Mammary epithelial cell (primary cell): ENCODE measurements at regions of chr18 and their contacts with region 1.

Region 1: GRCh38 chr18:74196220-74197119 is 48.1 kb downstream of the TIMM21 start:
- DNase-seq: peak; percentile 52
- H3K4me3 ChIP-seq: peak overlapping the region; percentile 37 to 42 (median 39)
- H3K27ac ChIP-seq: no peak overlapping the region
- H3K4me1 ChIP-seq: no peaks in the 10 kb centered on the region
- H3K27me3 ChIP-seq: no peaks in the 10 kb centered on the region
- CTCF ChIP-seq: peak; percentile 74 to 88

Region 2: GRCh38 chr18:74139888-74140287 is 56.6 kb before region 1 on chr18:
- CTCF ChIA-PET with region 1: no interaction called
- dilution Hi-C with region 1: no loop called
- in situ Hi-C with region 1: no loop called
- intact Hi-C with region 1: no loop called
- DNase-seq: peak; percentile 61
- H3K4me3 ChIP-seq: no peak overlapping the region
- H3K27ac ChIP-seq: no peak overlapping the region
- H3K4me1 ChIP-seq: peaks cover 31% of the 10 kb centered on the region
- H3K27me3 ChIP-seq: no peaks in the 10 kb centered on the region
- CTCF ChIP-seq: no peak

Region 3: GRCh38 chr18:74234326-74235171 is 38.1 kb after region 1 on chr18:
- CTCF ChIA-PET with region 1: no interaction called
- dilution Hi-C with region 1: no loop called
- in situ Hi-C with region 1: no loop called
- intact Hi-C with region 1: no loop called
- DNase-seq: peak; percentile 41
- H3K4me3 ChIP-seq: no peak overlapping the region
- H3K27ac ChIP-seq: no peak overlapping the region
- H3K4me1 ChIP-seq: no peaks in the 10 kb centered on the region
- H3K27me3 ChIP-seq: no peaks in the 10 kb centered on the region
- CTCF ChIP-seq: no peak

Region 4: DNA sequence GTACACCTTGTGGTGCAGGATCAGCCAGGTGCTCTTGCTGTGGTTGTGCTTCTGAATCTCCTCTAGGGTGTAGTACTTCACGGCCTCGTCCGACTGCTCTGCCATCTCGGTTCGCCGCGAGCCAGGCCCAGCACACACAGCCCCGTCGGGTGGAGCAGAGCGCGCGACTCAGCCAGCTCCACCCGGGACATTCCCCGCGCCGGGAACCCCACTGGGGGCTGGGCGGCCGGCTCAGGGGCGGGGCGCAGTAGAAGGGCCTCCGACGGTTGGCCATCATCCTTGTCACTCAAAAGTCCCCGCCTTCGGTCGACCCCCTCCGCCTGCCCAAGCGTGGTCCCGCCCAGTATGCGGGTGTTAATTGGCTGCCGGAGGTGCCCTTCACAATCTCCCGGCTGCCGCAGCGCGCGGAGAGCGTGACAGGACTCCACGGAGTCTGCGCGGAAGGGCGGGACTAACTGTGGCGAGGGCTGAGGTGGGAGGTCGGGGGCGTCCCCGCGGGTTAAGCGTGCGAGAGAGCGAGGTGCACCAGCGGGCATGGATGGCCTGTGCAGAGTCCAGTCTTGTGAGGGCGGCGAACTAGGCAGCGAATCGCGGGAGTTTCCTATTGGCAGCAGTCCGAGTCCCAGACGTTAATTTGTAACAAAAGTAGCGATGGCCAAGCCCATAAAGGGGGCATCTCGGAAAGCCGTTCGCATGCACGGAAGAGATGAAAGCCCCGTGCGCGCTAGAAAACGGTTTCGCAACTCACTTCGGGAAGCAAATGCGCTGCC is 95.5 kb after region 1 on chr18 and contains the start of gene CYB5A:
- CTCF ChIA-PET with region 1: no interaction called
- dilution Hi-C with region 1: no loop called
- in situ Hi-C with region 1: no loop called
- intact Hi-C with region 1: loop called (anchors 1 kb)
- DNase-seq: peak; percentile 90
- H3K4me3 ChIP-seq: peak within 1 kb of the TSS; percentile 80 to 90 (median 81)
- H3K27ac ChIP-seq: no peak within 1 kb of the TSS
- H3K4me1 ChIP-seq: peaks cover 8% of the 10 kb centered on the region
- H3K27me3 ChIP-seq: no peaks in the 10 kb centered on the region
- CTCF ChIP-seq: peak in 1 of 2 donors; percentile 18
- total RNA-seq, gene CYB5A: 25.7 to 27.8 TPM

Region 5: DNA sequence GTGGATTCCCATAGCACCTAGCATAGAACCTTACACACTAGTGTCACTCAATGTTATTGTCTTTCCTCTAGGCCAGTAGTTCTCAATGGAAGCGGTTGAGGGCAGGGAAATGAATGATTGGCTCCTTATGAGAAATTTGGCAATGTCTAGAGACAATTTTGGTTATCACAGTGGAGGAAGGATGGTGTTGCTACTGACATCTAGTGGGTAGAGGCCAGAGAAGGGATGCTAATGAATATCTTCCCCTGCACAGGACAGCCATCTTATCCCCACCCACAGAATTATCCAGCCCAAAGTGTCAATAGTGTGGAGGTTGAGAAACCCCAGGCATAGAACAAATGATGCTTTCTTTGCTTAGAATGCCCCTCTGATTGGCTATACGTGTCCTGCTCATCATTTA is 134.9 kb after region 1 on chr18:
- CTCF ChIA-PET with region 1: no interaction called
- dilution Hi-C with region 1: no loop called
- in situ Hi-C with region 1: loop called in 1 of 2 experiments (anchors 10 kb)
- intact Hi-C with region 1: loop called (anchors 1 kb)
- DNase-seq: peak; percentile 32
- H3K4me3 ChIP-seq: no peak overlapping the region
- H3K27ac ChIP-seq: no peak overlapping the region
- H3K4me1 ChIP-seq: no peaks in the 10 kb centered on the region
- H3K27me3 ChIP-seq: no peaks in the 10 kb centered on the region
- CTCF ChIP-seq: peak; percentile 49 to 68

Region 6: DNA sequence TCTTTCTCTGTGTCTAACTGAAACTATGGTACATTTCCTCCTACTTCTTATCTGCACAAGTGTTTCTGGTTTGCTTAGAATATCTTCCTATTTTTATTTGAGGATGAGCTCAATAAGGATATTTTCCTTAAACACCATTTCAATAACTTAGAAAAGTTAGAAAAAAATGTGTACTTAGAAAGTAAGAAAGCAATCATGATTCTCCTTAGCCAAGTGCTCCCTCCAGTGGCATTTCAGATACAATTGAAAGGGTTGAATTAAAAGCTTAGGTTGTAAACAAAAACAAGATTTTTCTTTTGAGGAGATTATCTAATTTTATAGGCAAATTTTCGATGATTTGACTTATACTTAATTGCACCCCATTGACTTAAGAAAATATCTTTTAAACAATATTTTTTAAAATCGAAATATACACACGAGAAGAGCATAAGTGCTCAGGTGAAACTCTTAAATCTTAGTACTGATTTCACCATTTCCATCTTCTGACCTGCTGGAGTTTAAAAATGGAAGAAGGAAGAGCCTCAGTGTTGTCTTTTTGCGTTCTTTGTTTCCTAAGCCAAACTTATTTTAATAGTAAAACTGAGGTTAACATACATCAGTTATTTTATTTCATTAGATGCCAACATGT is 146.1 kb after region 1 on chr18:
- CTCF ChIA-PET with region 1: interaction called, 4 read pairs
- dilution Hi-C with region 1: no loop called
- in situ Hi-C with region 1: loop called in 1 of 2 experiments (anchors 10 kb)
- intact Hi-C with region 1: loop called (anchors 1 kb)
- DNase-seq: peak; percentile 26
- H3K4me3 ChIP-seq: no peak overlapping the region
- H3K27ac ChIP-seq: no peak overlapping the region
- H3K4me1 ChIP-seq: no peaks in the 10 kb centered on the region
- H3K27me3 ChIP-seq: no peaks in the 10 kb centered on the region
- CTCF ChIP-seq: peak; percentile 43 to 61

Region 7: GRCh38 chr18:74495581-74496507 is 299.4 kb after region 1 on chr18 and contains the start of gene CNDP2:
- CTCF ChIA-PET with region 1: no interaction called
- dilution Hi-C with region 1: no loop called
- in situ Hi-C with region 1: loop called in 1 of 2 experiments (anchors 25 kb)
- intact Hi-C with region 1: loop called (anchors 1 kb)
- DNase-seq: peak; percentile 98
- H3K4me3 ChIP-seq: peak within 1 kb of the TSS; percentile 78 to 97 (median 89)
- H3K27ac ChIP-seq: peak within 1 kb of the TSS; percentile 82
- H3K4me1 ChIP-seq: peaks cover 26% of the 10 kb centered on the region
- H3K27me3 ChIP-seq: no peaks in the 10 kb centered on the region
- CTCF ChIP-seq: no peak
- total RNA-seq, gene CNDP2: 130 to 159 TPM

Region 8: GRCh38 chr18:74551936-74552555 is 355.6 kb after region 1 on chr18:
- CTCF ChIA-PET with region 1: no interaction called
- dilution Hi-C with region 1: no loop called
- in situ Hi-C with region 1: loop called (anchors 10 kb)
- intact Hi-C with region 1: loop called (anchors 1 kb)
- DNase-seq: peak; percentile 58
- H3K4me3 ChIP-seq: no peak overlapping the region
- H3K27ac ChIP-seq: no peak overlapping the region
- H3K4me1 ChIP-seq: no peaks in the 10 kb centered on the region
- H3K27me3 ChIP-seq: no peaks in the 10 kb centered on the region
- CTCF ChIP-seq: peak; percentile 70 to 87